Activated CD4-positive, alpha-beta memory T cell treated with anti-CD3 and anti-CD28 coated beads for 36 hours (primary cell): ENCODE measurements at regions of chr1 and their contacts with region 1.

Region 1: GRCh38 chr1:247681288-247681897 is 1.9 kb upstream of the OR13G1 start:
- DNase-seq: peak; percentile 48
- H3K4me3 Mint-ChIP-seq: no peak overlapping the region
- H3K27ac Mint-ChIP-seq: no peak overlapping the region
- H3K4me1 Mint-ChIP-seq: no peaks in the 10 kb centered on the region
- H3K27me3 Mint-ChIP-seq: no peaks in the 10 kb centered on the region

Region 2: DNA sequence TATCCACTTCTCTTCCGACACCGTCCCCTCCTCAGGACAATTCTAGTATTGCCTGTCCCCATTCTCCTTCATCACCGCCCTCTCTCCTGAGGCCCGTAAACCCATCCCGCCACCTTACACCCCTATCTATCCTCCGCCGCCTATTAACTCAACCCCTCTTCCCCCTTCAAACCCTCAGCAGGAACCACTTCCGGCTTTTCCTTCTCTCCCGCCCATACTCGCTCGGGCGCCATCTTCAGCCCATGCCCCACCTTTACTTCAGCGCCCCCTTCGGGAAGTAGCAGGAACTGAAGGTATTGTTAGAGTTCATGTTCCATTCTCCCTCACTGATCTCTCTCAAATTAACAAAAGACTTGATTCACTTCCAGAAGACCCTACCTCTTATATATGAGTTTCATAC is 393.9 kb before region 1 on chr1:
- CTCF ChIA-PET with region 1: no interaction called
- POLR2A ChIA-PET with region 1: no interaction called
- intact Hi-C with region 1: no loop called
- DNase-seq: no peak
- H3K4me3 Mint-ChIP-seq: no peak overlapping the region
- H3K27ac Mint-ChIP-seq: no peak overlapping the region
- H3K4me1 Mint-ChIP-seq: no peaks in the 10 kb centered on the region
- H3K27me3 Mint-ChIP-seq: no peaks in the 10 kb centered on the region

Region 3: GRCh38 chr1:247347477-247348222 is 333.7 kb before region 1 on chr1:
- CTCF ChIA-PET with region 1: no interaction called
- POLR2A ChIA-PET with region 1: no interaction called
- intact Hi-C with region 1: no loop called
- DNase-seq: no peak
- H3K4me3 Mint-ChIP-seq: no peak overlapping the region
- H3K27ac Mint-ChIP-seq: no peak overlapping the region
- H3K4me1 Mint-ChIP-seq: peaks cover 3% of the 10 kb centered on the region
- H3K27me3 Mint-ChIP-seq: peaks cover 27% of the 10 kb centered on the region

Region 4: DNA sequence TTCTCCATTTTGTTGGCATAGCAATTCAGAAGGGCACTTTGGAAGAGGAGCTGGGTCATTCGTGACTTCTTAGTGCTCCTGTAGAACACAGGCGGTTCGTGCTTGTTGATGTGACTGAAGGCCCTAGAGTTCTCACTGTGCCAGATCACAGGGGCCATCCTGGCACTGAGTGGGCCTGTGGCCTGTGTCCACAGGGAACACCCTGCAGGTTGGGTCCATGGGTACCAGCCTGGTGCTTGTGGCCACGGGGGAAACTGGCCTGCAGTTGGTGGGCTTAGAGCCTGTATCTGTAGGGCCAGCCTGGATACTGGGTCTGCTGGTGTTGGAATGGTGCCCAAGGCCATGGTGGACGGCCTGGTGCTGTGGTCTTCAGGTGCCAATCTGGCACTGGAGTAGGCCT is 66.8 kb before region 1 on chr1:
- CTCF ChIA-PET with region 1: no interaction called
- POLR2A ChIA-PET with region 1: no interaction called
- intact Hi-C with region 1: no loop called
- DNase-seq: no peak
- H3K4me3 Mint-ChIP-seq: no peak overlapping the region
- H3K27ac Mint-ChIP-seq: no peak overlapping the region
- H3K4me1 Mint-ChIP-seq: no peaks in the 10 kb centered on the region
- H3K27me3 Mint-ChIP-seq: peaks cover 1% of the 10 kb centered on the region

Region 5: GRCh38 chr1:247857069-247857984 is 175.9 kb after region 1 on chr1 and contains the start of gene TRIM58:
- CTCF ChIA-PET with region 1: no interaction called
- POLR2A ChIA-PET with region 1: no interaction called
- intact Hi-C with region 1: loop called (anchors 10 kb)
- DNase-seq: peak; percentile 46
- H3K4me3 Mint-ChIP-seq: peak within 1 kb of the TSS; percentile 67
- H3K27ac Mint-ChIP-seq: no peak within 1 kb of the TSS
- H3K4me1 Mint-ChIP-seq: peaks cover 6% of the 10 kb centered on the region
- H3K27me3 Mint-ChIP-seq: peaks cover 32% of the 10 kb centered on the region
- total RNA-seq, gene TRIM58: 0.19 TPM in 1 of 2 experiments, not detected in the other